ENCODE measurements at regions of chr4 and their contacts with region 1.

Region 1: DNA sequence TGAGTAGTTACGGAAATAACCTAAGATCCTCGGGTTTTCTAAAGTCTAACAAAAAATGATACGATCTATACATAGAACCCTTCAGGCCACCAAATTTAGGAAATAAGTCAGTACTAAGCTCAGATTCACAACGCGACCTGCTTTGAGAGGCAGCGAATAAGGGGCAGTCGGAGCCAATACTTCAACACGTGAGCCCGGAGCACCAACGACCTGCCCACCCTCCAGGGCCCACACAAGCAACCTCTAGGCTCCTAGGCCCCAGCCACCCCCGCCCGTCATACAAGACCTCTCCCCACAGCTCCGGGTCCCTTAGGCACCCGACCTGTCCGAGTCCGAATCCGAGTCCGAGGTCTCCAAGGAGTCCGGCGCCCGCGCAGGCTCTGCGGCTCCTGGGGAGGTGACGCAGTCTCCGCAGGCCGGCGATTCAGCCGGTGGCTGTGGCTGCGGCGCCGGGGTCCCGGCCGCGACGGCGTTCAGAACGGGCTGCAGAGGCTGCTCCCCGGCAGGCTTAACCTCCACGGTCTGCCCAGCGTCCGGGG is 580 bp downstream of the NAF1 start:
- DNase-seq: peak in 1 of 2 experiments; percentile 49
- H3K4me3 ChIP-seq: peak overlapping the region; percentile 82
- H3K27ac ChIP-seq: peak overlapping the region; percentile 71
- H3K4me1 ChIP-seq: peaks cover 17% of the 10 kb centered on the region; the same call in 1 of the 2 replicates
- H3K27me3 ChIP-seq: no peaks in the 10 kb centered on the region
- CTCF ChIP-seq: no peak

Region 2: GRCh38 chr4:162681212-162681611 is 484.9 kb before region 1 on chr4:
- CTCF ChIA-PET with region 1: no interaction called
- POLR2A ChIA-PET with region 1: interaction called, 24 read pairs
- intact Hi-C with region 1: no loop called
- DNase-seq: no peak
- H3K4me3 ChIP-seq: no peak overlapping the region
- H3K27ac ChIP-seq: no peak overlapping the region
- H3K4me1 ChIP-seq: no peaks in the 10 kb centered on the region
- H3K27me3 ChIP-seq: no peaks in the 10 kb centered on the region
- CTCF ChIP-seq: no peak

Region 3: DNA sequence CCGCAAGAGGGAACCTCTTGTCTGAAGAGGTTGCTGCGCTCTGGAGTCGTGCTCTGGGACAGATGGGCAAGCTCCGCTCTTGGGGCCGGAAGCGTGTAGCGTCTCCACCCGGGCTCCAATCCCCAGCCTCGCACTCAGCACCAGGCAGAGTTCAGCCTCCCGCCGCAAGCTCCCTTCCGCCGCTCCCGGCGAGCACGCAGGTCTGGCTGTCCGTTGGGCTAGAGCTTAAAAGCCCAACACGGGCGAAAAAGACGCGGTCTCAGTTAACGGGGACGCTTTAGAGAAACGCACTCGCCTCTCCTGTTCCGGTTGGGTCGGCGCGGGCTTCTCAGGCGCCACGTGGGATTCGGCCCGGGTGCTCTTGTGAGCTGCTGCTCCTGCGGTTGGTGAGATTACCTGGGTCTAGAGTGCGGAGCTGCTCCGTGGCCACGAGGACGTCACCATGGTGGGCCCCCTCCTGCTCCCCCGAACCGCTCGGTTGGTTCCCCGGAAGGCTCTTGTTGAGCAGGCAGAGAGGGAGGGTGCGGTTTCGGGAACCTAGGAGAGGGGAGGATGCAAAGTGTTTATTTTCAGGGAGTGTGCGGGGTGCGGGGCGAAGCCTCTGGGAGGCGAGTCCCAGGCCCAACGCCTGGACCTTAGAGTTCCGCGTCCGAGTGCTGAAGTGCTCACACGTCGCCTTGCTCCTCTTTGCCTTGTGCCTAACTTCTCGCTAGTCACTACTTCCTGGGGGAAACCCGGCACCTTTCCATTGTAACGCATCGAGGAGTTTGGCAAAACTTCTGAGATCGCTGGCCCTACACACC is 328.5 kb after region 1 on chr4 and contains the start of gene TMA16:
- CTCF ChIA-PET with region 1: no interaction called
- POLR2A ChIA-PET with region 1: no interaction called
- intact Hi-C with region 1: loop called (anchors 5 kb)
- DNase-seq: peak; percentile 77 to 83
- H3K4me3 ChIP-seq: peak within 1 kb of the TSS; percentile 76
- H3K27ac ChIP-seq: peak within 1 kb of the TSS; percentile 93
- H3K4me1 ChIP-seq: no peaks in the 10 kb centered on the region; the same call in 1 of the 2 replicates
- H3K27me3 ChIP-seq: no peaks in the 10 kb centered on the region
- CTCF ChIP-seq: no peak
- total RNA-seq, gene TMA16: 34.5 and 36.8 TPM in 2 replicates

Measured in PC-9 (cell line).